GM10248 (cell line): ENCODE measurements at regions of chr13 and their contacts with region 1.

Region 1: GRCh38 chr13:29081036-29081435 is 260.9 kb downstream of the MTUS2 start:
- DNase-seq: peak; percentile 55
- CTCF ChIP-seq: peak; percentile 59

Region 2: DNA sequence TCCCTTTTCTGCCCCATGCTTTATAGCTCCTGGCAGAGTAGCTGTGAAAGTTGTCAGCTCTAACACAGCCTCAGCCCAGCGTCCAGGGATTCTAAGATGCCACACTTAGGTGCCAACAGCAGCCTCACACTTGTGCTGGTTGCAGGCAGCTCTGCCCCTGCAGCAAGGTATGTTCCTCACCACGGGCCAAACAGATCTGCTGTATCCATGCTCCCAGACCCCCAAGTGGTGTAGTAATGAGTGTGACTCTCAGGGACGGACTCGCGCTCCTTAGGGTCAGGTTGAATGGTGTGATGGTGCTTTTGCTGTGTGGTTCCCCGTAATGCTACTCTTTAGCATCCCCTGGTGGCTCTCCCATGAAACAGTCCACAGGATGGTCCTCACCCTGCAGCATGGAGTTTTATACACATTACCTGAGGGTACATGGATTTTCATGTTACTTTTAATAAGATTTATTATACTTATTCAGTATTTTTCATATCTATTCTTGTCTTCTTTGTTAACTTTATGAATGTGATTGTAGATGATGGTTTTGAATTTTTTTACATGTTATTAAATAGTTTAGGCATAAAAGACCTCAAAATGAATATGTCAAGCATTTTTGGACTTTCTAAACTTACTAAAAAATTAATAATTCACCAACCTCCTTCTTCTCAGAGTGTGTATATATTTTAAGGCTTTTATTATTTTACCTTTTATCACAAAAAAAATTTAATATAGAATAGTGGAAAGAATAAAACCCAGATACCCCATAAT is 282.0 kb after region 1 on chr13:
- CTCF ChIA-PET with region 1: interaction called, 10 read pairs
- POLR2A ChIA-PET with region 1: no interaction called
- DNase-seq: peak; percentile 75
- CTCF ChIP-seq: peak; percentile 87